ENCODE measurements at regions of chr11 and their contacts with region 1.

Region 1: DNA sequence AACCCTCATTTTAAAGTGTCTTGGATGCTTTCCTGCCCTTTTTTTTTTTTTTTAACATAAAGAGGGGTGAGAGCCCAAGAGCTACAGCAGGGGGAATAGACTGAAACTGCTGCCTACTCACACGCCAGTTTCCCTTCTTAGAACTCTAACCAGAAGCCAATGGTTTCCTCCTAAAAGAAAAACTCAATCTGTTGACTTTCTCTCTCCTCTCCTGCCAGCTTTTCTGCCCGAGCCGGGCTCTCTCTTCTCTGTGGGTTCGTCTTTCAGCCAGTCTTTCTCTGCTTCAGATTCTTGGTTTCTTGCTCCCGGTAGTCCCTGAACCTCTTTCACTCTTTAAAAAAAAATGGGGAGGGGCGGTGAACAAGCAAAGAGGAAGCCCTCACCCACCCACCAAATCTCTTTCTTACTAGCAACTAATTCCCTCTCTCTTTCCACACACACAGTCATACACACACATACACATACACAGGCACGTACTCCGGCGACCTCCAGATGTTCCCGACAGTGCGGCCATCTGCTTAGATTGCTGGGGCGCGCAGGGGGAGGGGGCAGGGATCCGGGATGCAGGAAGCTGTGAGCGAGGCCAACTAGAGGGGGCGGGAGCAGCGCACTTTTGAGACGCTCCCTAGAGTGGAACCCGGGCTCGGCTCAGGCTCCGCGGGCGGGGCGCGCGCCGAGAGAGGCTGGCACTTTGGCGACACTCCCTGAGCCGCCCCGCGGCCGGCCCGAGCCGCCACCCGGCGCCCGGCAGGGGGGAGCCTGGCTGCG is 446 bp upstream of the TSKU start:
- DNase-seq: peak; percentile 92
- H3K4me3 ChIP-seq: peak overlapping the region; percentile 86 to 98 (median 97)
- H3K27ac ChIP-seq: peak overlapping the region; percentile 89
- H3K4me1 ChIP-seq: peaks cover 42% of the 10 kb centered on the region
- H3K27me3 ChIP-seq: no peaks in the 10 kb centered on the region
- CTCF ChIP-seq: no peak

Region 2: DNA sequence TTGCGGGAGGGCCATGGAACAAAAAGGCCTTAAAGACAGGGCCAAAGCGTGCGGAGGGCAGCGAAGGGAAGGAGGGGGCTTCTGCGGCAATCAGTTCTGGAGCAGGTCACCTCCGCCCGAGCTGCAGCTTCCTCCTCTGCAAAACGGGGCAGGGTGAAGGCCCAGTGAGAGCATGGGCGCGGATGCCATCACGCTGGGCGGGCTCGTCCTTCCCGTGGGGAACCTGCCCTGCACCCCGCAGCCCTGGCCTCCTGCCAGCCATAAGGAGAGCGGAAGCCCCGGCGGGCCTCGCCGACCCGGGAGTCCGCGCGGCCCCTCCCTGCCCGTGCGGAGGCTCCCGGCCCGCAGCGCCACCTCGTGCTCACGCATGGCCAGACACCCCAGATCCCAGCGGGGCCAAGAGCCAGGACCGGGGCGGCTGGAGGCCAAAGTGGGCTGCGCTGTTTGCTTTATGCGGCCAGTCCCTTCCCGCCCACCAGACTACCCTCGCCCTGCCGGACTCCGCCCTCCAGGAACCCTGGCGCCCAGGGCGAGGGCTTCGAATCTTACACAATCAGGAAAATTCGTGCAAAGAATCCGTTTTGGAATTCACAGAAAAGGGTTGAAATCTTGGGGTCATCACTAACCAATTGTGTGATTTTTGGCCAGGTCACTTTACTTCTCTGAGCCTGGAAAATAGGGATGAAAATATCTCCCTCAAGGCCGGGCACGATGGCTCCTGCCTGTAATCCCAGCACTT is 16.5 kb after region 1 on chr11:
- CTCF ChIA-PET with region 1: no interaction called
- dilution Hi-C with region 1: no loop called
- in situ Hi-C with region 1: no loop called
- intact Hi-C with region 1: loop called (anchors 1 kb)
- DNase-seq: peak; percentile 47
- H3K4me3 ChIP-seq: no peak overlapping the region
- H3K27ac ChIP-seq: no peak overlapping the region
- H3K4me1 ChIP-seq: peaks cover 14% of the 10 kb centered on the region
- H3K27me3 ChIP-seq: no peaks in the 10 kb centered on the region
- CTCF ChIP-seq: peak; percentile 65 to 93

Region 3: DNA sequence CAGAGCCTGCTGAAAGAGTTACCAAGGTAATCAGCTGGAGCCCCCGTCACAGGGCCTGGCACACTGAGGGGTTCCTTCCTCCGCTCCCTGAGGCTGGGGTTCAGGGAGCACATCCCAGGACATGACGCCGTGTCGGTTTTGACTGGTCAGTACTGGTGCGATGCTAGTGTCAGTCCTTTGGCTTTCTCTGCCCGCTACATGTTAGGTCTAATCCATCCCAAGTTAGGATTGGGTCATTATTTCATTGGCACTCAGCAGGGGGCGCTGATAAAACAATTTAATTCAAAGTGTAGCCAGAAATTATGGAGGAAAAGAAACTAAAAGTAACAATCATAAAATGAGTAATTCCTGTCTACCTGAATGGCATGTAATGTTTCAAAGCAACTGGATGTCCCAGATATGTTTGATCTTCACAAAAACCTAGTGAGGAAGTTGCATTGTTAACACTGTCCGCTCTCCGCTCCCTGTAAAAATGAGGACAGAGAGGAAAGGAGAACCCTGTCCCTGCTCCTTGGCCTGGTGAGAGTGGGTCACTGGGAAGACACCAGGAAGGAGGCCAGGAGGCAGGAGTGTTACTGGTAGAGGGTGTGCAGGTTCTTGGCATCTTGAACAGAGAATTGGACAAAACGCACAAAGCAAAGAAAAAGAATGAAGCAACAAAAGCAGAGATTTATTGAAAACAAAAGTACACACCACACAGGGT is 27.6 kb after region 1 on chr11:
- CTCF ChIA-PET with region 1: no interaction called
- dilution Hi-C with region 1: no loop called
- in situ Hi-C with region 1: no loop called
- intact Hi-C with region 1: no loop called
- DNase-seq: peak; percentile 56
- H3K4me3 ChIP-seq: no peak overlapping the region
- H3K27ac ChIP-seq: no peak overlapping the region
- H3K4me1 ChIP-seq: peaks cover 8% of the 10 kb centered on the region
- H3K27me3 ChIP-seq: no peaks in the 10 kb centered on the region
- CTCF ChIP-seq: peak; percentile 55 to 64

Measured in mammary epithelial cell (primary cell).